AG04449 (cell line): ENCODE measurements at regions of chr3 and their contacts with region 1.

Region 1: GRCh38 chr3:52090131-52090932 is 34.0 kb upstream of the DUSP7 start:
- DNase-seq: peak; percentile 83
- H3K4me3 ChIP-seq: no peak overlapping the region
- CTCF ChIP-seq: no peak

Region 2: GRCh38 chr3:52108302-52109232 is 18.2 kb after region 1 on chr3:
- CTCF ChIA-PET with region 1: interaction called, 14 read pairs
- POLR2A ChIA-PET with region 1: interaction called, 3 read pairs
- DNase-seq: no peak
- H3K4me3 ChIP-seq: 0 out of 2 replicates have a peak overlapping the region, but pooled peaks have one; percentile 0
- CTCF ChIP-seq: peak; percentile 73